Activated CD4-positive, alpha-beta memory T cell treated with anti-CD3 and anti-CD28 coated beads for 36 hours (primary cell): ENCODE measurements at regions of chr2 and their contacts with region 1.

Region 1: GRCh38 chr2:148726228-148726627 is 81.7 kb downstream of the EPC2 start:
- DNase-seq: no peak
- H3K4me3 Mint-ChIP-seq: no peak overlapping the region
- H3K27ac Mint-ChIP-seq: peak overlapping the region; percentile 33
- H3K4me1 Mint-ChIP-seq: peaks cover 50% of the 10 kb centered on the region
- H3K27me3 Mint-ChIP-seq: no peaks in the 10 kb centered on the region

Region 2: DNA sequence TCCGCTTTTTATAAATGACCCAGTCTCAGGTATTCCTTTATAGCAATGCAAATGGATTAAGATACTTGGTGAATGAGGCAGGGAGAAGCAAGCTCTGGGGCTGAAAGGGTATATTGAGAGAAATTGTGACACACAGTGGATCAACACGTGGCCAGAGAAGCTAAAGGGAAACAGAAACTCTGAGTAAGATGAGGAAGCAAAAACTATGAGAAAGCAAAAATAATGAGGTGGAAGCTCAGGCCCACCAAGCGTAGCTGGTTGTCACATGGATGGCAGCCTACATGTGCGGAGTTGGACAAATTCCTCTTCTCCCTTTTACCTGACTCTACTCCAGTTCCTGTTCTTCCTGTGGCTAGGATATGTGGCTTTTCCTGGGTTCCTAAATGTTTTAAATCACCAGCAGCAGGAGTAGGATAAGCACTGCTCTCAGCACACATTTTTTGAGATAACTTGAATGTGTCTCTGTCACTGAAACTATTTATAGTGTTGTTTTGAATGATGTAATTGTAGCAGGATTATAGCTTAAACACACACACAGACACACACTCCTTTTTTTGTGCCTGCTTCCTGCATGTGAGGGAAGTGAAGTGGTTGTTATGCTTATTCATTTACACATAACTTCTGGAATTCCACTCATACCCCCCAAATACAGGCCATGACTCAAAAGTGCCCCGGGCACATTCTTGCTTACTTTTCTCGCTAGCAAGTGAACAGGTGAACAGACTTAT is 111.7 kb before region 1 on chr2:
- CTCF ChIA-PET with region 1: no interaction called
- POLR2A ChIA-PET with region 1: no interaction called
- intact Hi-C with region 1: no loop called
- DNase-seq: peak; percentile 28
- H3K4me3 Mint-ChIP-seq: no peak overlapping the region
- H3K27ac Mint-ChIP-seq: peak overlapping the region; percentile 47
- H3K4me1 Mint-ChIP-seq: peaks cover 14% of the 10 kb centered on the region
- H3K27me3 Mint-ChIP-seq: peaks cover 2% of the 10 kb centered on the region

Region 3: DNA sequence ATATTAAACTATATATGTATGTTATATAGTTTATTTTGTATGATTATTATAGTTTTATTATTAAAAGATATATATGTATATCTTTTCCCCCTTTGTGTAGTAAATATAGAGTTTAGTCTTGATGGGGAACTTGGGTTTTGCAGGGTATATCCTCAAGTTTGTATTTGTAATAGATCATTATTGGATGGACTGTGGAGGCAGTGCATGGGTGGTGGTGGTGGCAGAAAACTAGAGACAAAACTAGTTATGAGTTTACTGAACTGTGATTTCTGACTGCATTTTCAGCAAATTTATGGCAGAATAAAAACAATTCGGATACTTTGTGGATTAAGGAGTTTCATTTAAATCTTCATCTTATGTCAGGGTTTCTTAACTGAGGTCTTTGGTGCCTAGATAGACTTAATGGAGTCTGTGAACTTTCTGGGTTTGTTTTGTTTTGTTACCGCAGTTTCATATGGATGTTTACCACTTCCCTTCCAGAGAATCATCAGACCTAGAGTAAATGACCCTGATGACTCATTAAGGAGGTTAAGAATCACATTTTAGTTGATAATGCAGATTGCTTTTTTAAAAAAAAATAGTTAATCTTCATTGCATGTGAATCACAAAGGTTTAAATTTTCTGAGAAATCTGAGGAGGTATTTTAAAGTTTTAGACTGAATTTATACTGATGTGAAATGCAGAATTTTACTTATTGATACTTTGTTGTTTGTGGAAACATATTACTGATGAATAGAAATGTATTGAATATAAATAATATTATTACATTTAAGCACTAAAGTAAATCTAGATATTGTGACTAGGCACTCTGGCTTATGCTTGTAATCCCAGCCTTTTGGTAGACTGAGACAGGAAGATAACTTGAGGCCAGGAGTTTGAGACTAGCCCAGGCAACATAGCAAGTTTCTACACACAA is 67.2 kb before region 1 on chr2:
- CTCF ChIA-PET with region 1: no interaction called
- POLR2A ChIA-PET with region 1: no interaction called
- intact Hi-C with region 1: loop called (anchors 5 kb)
- DNase-seq: no peak
- H3K4me3 Mint-ChIP-seq: peak overlapping the region; percentile 35
- H3K27ac Mint-ChIP-seq: peak overlapping the region; percentile 75
- H3K4me1 Mint-ChIP-seq: peaks cover 74% of the 10 kb centered on the region
- H3K27me3 Mint-ChIP-seq: no peaks in the 10 kb centered on the region

Region 4: DNA sequence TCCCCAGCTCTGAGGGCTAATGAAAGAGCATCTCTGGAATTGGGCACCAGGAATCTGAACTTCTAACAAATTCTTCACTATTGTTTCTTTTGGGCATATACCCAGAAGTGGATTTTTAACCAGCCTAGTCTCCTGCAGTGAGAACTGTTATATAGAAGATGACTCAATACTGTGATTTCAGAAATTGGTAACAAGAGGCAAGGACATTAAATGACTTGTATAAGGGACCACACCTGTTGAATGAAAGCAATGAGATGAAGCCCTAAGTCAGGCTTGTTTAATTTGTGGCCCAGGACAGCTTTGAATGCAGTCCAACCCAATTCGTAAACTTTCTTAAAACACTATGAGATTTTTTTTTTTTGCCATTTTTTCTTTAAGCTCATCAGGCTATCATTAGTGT is 23.8 kb before region 1 on chr2:
- CTCF ChIA-PET with region 1: no interaction called
- POLR2A ChIA-PET with region 1: no interaction called
- intact Hi-C with region 1: loop called (anchors 2 kb)
- DNase-seq: no peak
- H3K4me3 Mint-ChIP-seq: no peak overlapping the region
- H3K27ac Mint-ChIP-seq: peak overlapping the region; percentile 33
- H3K4me1 Mint-ChIP-seq: peaks cover 26% of the 10 kb centered on the region
- H3K27me3 Mint-ChIP-seq: no peaks in the 10 kb centered on the region